ENCODE measurements at regions of chr2 and their contacts with region 1.

Region 1: GRCh38 chr2:169069341-169069740 is at the start of gene DHRS9:
- DNase-seq: peak; percentile 97
- ATAC-seq: peak; percentile 97
- H3K4me3 ChIP-seq: no peak within 1 kb of the TSS
- H3K27ac ChIP-seq: peak within 1 kb of the TSS; percentile 65
- H3K4me1 ChIP-seq: peaks cover 44% of the 10 kb centered on the region
- H3K27me3 ChIP-seq: no peaks in the 10 kb centered on the region
- CTCF ChIP-seq: no peak
- total RNA-seq, gene DHRS9: 0.22 TPM in 1 of 2 replicates, not detected in the other

Region 2: GRCh38 chr2:169038338-169038757 is 31.0 kb before region 1 on chr2:
- CTCF ChIA-PET with region 1: no interaction called
- POLR2A ChIA-PET with region 1: no interaction called
- intact Hi-C with region 1: loop called (anchors 2 kb)
- DNase-seq: peak; percentile 90
- ATAC-seq: peak; percentile 76
- H3K4me3 ChIP-seq: no peak overlapping the region
- H3K27ac ChIP-seq: peak overlapping the region; percentile 77
- H3K4me1 ChIP-seq: peaks cover 31% of the 10 kb centered on the region
- H3K27me3 ChIP-seq: no peaks in the 10 kb centered on the region
- CTCF ChIP-seq: no peak